ENCODE measurements at regions of chr4 and their contacts with region 1.

Region 1: GRCh38 chr4:55321707-55322264 is 24.3 kb upstream of the SRD5A3 start:
- DNase-seq: peak; percentile 83
- ATAC-seq: peak in 1 of 2 donors; percentile 67

Region 2: GRCh38 chr4:54971474-54971950 is 350.3 kb before region 1 on chr4:
- intact Hi-C with region 1: loop called (anchors 2 to 10 kb)
- DNase-seq: no peak
- ATAC-seq: peak; percentile 73 to 82

Region 3: GRCh38 chr4:54999003-54999402 is 322.8 kb before region 1 on chr4:
- intact Hi-C with region 1: loop called (anchors 2 to 5 kb)
- DNase-seq: no peak
- ATAC-seq: peak; percentile 76 to 84

Region 4: DNA sequence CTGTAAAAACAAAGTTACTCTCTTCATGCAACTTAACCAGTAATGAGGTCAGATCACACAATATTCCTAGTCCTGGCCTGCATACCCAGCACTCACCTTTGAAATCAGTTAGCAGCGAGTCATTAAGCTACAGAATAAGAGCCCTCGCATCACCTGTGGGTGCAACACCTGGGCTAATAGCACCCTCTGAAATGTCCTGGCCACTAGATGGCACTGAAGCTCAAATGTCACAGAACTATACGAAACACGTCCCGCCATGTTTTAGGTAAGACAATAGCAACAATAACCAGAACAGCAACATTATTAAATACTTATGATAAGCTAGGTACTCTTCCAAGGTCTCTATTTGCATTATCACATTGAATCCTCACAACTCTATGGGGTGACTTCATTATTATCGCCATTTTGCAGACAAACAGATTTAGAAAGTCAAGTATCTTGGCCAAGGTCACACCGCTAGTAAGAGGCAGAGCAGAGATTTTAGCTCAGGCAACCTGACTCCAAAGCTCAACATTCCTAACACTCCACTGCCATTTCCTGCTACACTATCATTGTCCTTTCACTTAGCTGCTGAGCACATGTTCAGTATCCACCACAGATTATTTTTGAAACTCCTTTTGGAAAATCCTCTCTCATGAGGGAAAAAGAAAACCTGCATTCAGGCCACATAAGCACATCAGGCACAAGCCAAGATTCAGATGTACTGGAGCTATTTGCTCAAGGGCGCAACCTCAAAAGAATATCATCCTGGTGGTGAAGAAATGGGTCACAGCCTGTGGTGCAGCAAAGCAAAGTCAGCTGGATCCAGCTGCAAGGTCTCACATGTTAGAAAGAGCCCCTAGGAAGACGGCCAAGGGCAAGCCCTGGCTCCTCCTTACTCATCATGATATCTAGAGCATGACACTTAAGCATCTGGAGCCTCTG is 136.9 kb before region 1 on chr4:
- intact Hi-C with region 1: loop called in 1 of 2 experiments (anchors 10 kb)
- DNase-seq: peak; percentile 23
- ATAC-seq: peak; percentile 34 to 73

Region 5: DNA sequence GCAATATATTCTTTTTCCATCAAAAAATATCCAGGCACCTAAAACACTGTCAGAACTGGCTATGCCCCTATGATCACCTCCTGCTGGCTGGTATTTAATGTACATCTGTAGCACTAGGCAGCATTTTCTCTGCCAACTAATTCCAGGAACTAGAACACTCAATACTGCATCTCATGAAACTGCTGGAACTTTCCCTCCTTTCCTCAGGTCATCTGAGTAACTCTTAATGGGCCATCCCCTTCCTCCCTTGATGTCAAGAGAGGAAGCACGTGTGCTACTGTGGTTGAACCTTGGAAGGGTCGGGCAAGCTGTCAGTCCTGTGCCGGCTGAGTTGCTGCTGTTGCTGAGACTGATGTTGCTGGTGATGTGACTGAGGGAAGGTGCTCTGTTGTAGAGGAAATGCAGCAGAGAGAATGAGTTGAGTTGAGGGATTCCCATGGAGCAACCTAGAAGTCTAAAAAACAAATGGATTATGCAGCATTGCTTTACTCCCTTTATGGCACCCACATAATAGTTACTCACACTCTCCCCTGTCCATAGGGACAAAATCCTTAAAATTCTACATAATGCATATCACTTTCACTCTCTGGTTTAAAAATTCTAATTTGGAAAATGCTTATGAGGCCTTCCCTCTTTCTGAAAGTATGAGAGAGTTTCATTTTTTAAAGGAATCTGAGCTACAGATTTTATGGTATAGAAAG is 113.5 kb after region 1 on chr4:
- intact Hi-C with region 1: no loop called
- DNase-seq: no peak
- ATAC-seq: peak in 1 of 2 donors; percentile 50

Measured in left cardiac atrium (tissue), 4 donors.